Sigmoid colon (tissue), 7 donors: ENCODE measurements at regions of chr10 and their contacts with region 1.

Region 1: GRCh38 chr10:60434418-60435046 is 44.9 kb upstream of the ANK3 start:
- DNase-seq: no peak
- H3K4me3 ChIP-seq: no peak overlapping the region
- H3K27ac ChIP-seq: no peak overlapping the region
- H3K4me1 ChIP-seq: peaks cover 0 to 44% (median 28%) of the 10 kb centered on the region in 4 donors
- H3K27me3 ChIP-seq: no peaks in the 10 kb centered on the region
- CTCF ChIP-seq: peak; percentile 58 to 71 (median 66)
- EP300 ChIP-seq: no peak
- POLR2A ChIP-seq: no peak

Region 2: GRCh38 chr10:60099998-60100747 is 334.4 kb before region 1 on chr10:
- intact Hi-C with region 1: loop called (anchors 2 kb)
- DNase-seq: no peak
- H3K4me3 ChIP-seq: no peak overlapping the region
- H3K27ac ChIP-seq: no peak overlapping the region
- H3K4me1 ChIP-seq: peaks cover 0 to 9% (median 3%) of the 10 kb centered on the region in 4 donors
- H3K27me3 ChIP-seq: no peaks in the 10 kb centered on the region
- CTCF ChIP-seq: peak; percentile 16 to 44 (median 42)
- EP300 ChIP-seq: no peak
- POLR2A ChIP-seq: no peak

Region 3: GRCh38 chr10:60114765-60115586 is 319.6 kb before region 1 on chr10:
- intact Hi-C with region 1: loop called (anchors 5 kb)
- DNase-seq: no peak
- H3K4me3 ChIP-seq: no peak overlapping the region
- H3K27ac ChIP-seq: no peak overlapping the region
- H3K4me1 ChIP-seq: peaks cover 0 to 6% (median 0%) of the 10 kb centered on the region in 4 donors
- H3K27me3 ChIP-seq: no peaks in the 10 kb centered on the region
- CTCF ChIP-seq: peak in 3 of 4 experiments; percentile 56 to 58 (median 56)
- EP300 ChIP-seq: no peak
- POLR2A ChIP-seq: no peak

Region 4: GRCh38 chr10:60208676-60209269 is 225.8 kb before region 1 on chr10:
- intact Hi-C with region 1: loop called (anchors 5 kb)
- DNase-seq: no peak
- H3K4me3 ChIP-seq: no peak overlapping the region
- H3K27ac ChIP-seq: no peak overlapping the region
- H3K4me1 ChIP-seq: peaks cover 0 to 5% (median 2%) of the 10 kb centered on the region in 4 donors
- H3K27me3 ChIP-seq: no peaks in the 10 kb centered on the region
- CTCF ChIP-seq: peak; percentile 64 to 81 (median 74)
- EP300 ChIP-seq: no peak
- POLR2A ChIP-seq: no peak